Endothelial cell of umbilical vein (primary cell): ENCODE measurements at regions of chr1 and their contacts with region 1.

Region 1: GRCh38 chr1:167066333-167067122 is 23.6 kb downstream of the GPA33 start:
- DNase-seq: peak; percentile 43
- H3K4me3 ChIP-seq: no peak overlapping the region
- H3K27ac ChIP-seq: no peak overlapping the region
- H3K4me1 ChIP-seq: no peaks in the 10 kb centered on the region
- H3K27me3 ChIP-seq: peaks cover 0 to 9% of the 10 kb centered on the region in 2 experiments
- CTCF ChIP-seq: peak; percentile 94 to 98
- POLR2A ChIP-seq: no peak

Region 2: GRCh38 chr1:166910396-166910994 is 156.0 kb before region 1 on chr1:
- CTCF ChIA-PET with region 1: interaction called, 509 read pairs
- POLR2A ChIA-PET with region 1: no interaction called
- dilution Hi-C with region 1: no loop called
- intact Hi-C with region 1: no loop called
- DNase-seq: peak; percentile 81
- H3K4me3 ChIP-seq: no peak overlapping the region
- H3K27ac ChIP-seq: no peak overlapping the region
- H3K4me1 ChIP-seq: no peaks in the 10 kb centered on the region
- H3K27me3 ChIP-seq: peaks cover 2 to 10% of the 10 kb centered on the region in 2 experiments
- CTCF ChIP-seq: peak; percentile 58 to 66
- POLR2A ChIP-seq: no peak

Region 3: DNA sequence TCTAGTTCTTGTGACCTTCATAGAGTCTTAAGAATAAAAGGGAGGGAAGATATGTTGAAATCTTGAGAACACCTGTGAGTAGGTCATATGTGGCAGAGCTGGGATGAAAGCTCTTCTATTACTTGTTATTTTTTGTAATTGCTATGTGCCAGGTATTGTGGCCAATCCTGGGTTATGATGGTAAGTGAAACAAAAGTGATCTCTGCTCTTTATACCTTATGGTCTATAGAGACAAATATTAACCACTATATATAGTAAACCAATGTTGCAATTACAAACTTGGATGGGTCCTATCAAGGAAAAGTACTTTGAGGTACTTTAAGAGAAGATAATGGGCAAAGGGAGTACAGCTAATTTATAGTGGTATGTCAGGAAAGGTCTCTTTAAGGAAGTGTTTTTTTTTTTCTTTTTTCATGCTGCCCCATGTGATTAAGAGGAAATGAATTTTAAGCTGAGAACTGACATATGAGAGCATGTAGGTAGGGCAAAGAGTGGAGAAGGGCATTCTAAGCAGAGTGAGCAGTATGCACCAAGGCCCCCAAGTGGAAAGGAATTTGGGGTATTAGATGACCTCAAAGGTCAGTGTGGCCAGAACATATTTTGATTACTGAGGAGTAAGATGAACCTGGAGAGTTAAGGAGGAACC is 197.4 kb after region 1 on chr1:
- CTCF ChIA-PET with region 1: interaction called, 4 read pairs
- POLR2A ChIA-PET with region 1: no interaction called
- dilution Hi-C with region 1: no loop called
- intact Hi-C with region 1: loop called (anchors 1 kb)
- DNase-seq: no peak
- H3K4me3 ChIP-seq: no peak overlapping the region
- H3K27ac ChIP-seq: no peak overlapping the region
- H3K4me1 ChIP-seq: no peaks in the 10 kb centered on the region
- H3K27me3 ChIP-seq: no peaks in the 10 kb centered on the region
- CTCF ChIP-seq: no peak
- POLR2A ChIP-seq: no peak

Region 4: DNA sequence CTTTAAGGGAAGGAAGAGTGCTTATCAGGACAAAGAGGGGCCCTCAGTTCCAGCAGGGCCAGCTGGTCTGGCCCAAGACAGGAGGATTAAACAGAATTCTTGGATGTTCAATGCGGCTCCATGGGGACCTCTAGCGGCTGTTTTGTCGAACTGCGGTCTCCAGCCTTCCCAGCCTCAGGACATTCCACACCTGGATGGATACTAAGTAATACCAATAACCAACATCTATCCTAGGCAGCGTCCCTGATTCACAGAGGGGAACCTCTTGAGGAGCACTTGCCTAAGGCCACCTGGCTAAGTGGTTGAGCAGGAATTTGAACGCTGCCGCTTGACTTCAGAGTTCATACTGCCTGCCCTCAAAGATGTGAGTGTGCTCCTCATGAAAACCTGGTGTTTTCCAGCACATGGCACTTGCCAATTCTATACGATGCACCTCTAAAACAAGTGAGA is 467.3 kb after region 1 on chr1:
- CTCF ChIA-PET with region 1: interaction called, 78 read pairs
- POLR2A ChIA-PET with region 1: no interaction called
- dilution Hi-C with region 1: no loop called
- intact Hi-C with region 1: loop called (anchors 1 kb)
- DNase-seq: peak; percentile 47
- H3K4me3 ChIP-seq: no peak overlapping the region
- H3K27ac ChIP-seq: no peak overlapping the region
- H3K4me1 ChIP-seq: no peaks in the 10 kb centered on the region
- H3K27me3 ChIP-seq: peaks cover 0 to 2% of the 10 kb centered on the region in 2 experiments
- CTCF ChIP-seq: peak; percentile 84 to 87
- POLR2A ChIP-seq: no peak

Region 5: DNA sequence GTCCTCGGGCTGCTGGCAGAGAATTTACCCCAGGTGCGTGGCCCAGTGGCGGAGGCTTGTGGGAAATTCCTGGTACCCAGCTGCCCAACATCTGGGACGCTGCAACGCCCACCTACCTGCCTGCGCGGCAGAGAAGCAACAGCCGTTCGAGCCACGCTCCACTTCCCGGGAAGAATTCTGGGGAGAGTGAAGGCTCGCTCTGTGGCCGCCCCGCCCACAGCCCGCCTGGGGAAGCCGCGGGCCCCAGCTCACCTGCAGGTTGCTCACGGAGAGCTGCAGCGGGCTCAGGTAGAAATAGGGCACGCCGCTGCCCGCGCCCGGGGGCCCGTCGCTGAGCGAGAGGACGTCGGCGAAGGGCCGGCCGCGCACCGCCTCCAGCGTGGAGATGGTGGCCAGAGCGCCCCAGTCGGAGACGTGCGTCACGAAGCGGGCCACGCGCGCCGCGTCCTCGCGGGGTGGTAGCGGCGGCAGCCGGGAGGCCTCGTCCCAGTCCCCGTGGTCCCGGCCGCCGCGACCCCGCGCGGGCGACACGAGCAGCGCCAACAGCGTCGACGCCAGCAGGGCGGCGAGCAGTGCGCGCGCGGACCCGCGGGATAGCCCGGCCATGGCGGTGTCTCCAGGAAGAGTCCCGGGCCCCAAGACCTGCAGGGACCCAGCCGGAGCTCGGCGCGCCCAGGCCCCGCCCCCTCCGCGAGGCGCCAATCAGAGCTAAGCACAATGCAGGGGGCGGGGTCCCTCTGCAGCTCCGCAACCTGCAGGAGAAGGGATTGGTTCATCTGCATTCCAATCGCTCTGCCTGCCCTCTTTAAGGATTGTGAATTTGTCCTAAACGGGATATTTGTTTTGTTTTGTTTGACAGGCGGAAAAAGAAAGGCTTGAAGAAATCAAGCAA is 486.9 kb after region 1 on chr1 and contains the start of gene CREG1:
- CTCF ChIA-PET with region 1: interaction called, 7 read pairs
- POLR2A ChIA-PET with region 1: no interaction called
- dilution Hi-C with region 1: no loop called
- intact Hi-C with region 1: loop called (anchors 1 kb)
- DNase-seq: peak; percentile 91
- H3K4me3 ChIP-seq: peak within 1 kb of the TSS; percentile 42 to 60 (median 49)
- H3K27ac ChIP-seq: no peak within 1 kb of the TSS
- H3K4me1 ChIP-seq: peaks cover 5% of the 10 kb centered on the region
- H3K27me3 ChIP-seq: peaks cover 0 to 2% of the 10 kb centered on the region in 2 experiments
- CTCF ChIP-seq: no peak
- POLR2A ChIP-seq: peak; percentile 49
- total RNA-seq, gene CREG1: 12.1 and 15.8 TPM in 2 replicates